ENCODE measurements at regions of chr13 and their contacts with region 1.

Region 1: GRCh38 chr13:106753251-106753650 is 185.3 kb upstream of the ARGLU1 start:
- DNase-seq: peak; percentile 35 to 47
- ATAC-seq: peak in 7 of 8 donors; percentile 45 to 83 (median 79)
- H3K4me3 ChIP-seq: peak overlapping the region in 2 of 10 donors; percentile 15 to 19
- H3K27ac ChIP-seq: peak overlapping the region in 8 of 10 donors; percentile 31 to 71 (median 54)
- H3K4me1 ChIP-seq: peaks cover 0 to 43% (median 7%) of the 10 kb centered on the region in 9 donors
- H3K27me3 ChIP-seq: no peaks in the 10 kb centered on the region
- CTCF ChIP-seq: no peak

Region 2: GRCh38 chr13:106567474-106568298 is 185.6 kb before region 1 on chr13 and contains the start of gene ARGLU1:
- intact Hi-C with region 1: loop called in 1 of 10 experiments (anchors 10 kb)
- DNase-seq: peak; percentile 94 to 96
- ATAC-seq: peak; percentile 90 to 98 (median 96)
- H3K4me3 ChIP-seq: peak within 1 kb of the TSS; percentile 66 to 96 (median 87)
- H3K27ac ChIP-seq: peak within 1 kb of the TSS; percentile 92 to 99 (median 97)
- H3K4me1 ChIP-seq: peaks cover 15 to 54% (median 44%) of the 10 kb centered on the region in 9 donors
- H3K27me3 ChIP-seq: no peaks in the 10 kb centered on the region
- CTCF ChIP-seq: no peak
- total RNA-seq, gene ARGLU1: 19.1 to 42.2 (median 29.6) TPM

Region 3: DNA sequence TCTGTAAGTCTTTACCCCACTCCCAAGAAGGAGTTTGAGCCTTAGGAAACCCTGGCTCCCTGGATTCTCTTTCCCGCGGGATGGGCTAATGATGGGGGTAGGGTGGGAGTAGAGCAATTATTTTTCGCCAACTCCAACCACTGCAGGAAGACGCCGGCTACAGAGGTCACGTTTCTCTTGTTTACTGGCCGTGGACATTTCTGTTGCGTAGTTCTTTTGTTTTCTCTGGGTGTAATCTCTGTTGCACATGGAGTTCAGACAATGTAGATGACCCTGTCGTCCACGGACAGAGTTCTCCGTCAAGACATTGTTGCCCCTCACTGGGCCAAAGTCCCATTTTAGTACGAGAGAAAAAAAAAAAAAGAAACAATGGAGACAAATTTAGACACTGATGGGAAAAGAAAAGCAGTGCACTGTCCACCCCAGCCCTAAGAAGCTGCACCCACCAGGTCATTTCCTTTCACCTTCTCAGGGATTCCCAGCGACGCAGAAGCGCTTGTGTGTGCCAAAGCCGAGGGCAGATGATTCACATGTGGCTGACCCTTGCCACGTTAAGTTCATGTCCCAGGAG is 51.4 kb before region 1 on chr13:
- intact Hi-C with region 1: loop called in 1 of 10 experiments (anchors 5 kb)
- DNase-seq: peak; percentile 17 to 67
- ATAC-seq: peak; percentile 77 to 93 (median 90)
- H3K4me3 ChIP-seq: peak overlapping the region in 2 of 10 donors; percentile 0 to 19
- H3K27ac ChIP-seq: peak overlapping the region; percentile 58 to 86 (median 74)
- H3K4me1 ChIP-seq: peaks cover 0 to 57% (median 10%) of the 10 kb centered on the region in 9 donors
- H3K27me3 ChIP-seq: no peaks in the 10 kb centered on the region
- CTCF ChIP-seq: no peak

Region 4: GRCh38 chr13:106709522-106709921 is 43.7 kb before region 1 on chr13:
- intact Hi-C with region 1: loop called in 2 of 10 experiments (anchors 5 kb)
- DNase-seq: peak in 1 of 2 donors; percentile 54
- ATAC-seq: peak; percentile 70 to 92 (median 88)
- H3K4me3 ChIP-seq: peak overlapping the region in 8 of 10 donors; percentile 19 to 50 (median 40)
- H3K27ac ChIP-seq: peak overlapping the region; percentile 65 to 90 (median 82)
- H3K4me1 ChIP-seq: peaks cover 0 to 67% (median 17%) of the 10 kb centered on the region in 9 donors
- H3K27me3 ChIP-seq: no peaks in the 10 kb centered on the region
- CTCF ChIP-seq: no peak

Region 5: GRCh38 chr13:106802976-106803375 is 49.7 kb after region 1 on chr13:
- intact Hi-C with region 1: loop called in 1 of 10 experiments (anchors 5 kb)
- DNase-seq: no peak
- ATAC-seq: no peak
- H3K4me3 ChIP-seq: no peak overlapping the region
- H3K27ac ChIP-seq: no peak overlapping the region
- H3K4me1 ChIP-seq: peaks cover 0 to 23% (median 0%) of the 10 kb centered on the region in 9 donors
- H3K27me3 ChIP-seq: peaks cover 0 to 2% (median 0%) of the 10 kb centered on the region in 7 donors
- CTCF ChIP-seq: no peak

Region 6: GRCh38 chr13:106858908-106859904 is 106.0 kb after region 1 on chr13:
- intact Hi-C with region 1: loop called in 1 of 10 experiments (anchors 5 kb)
- DNase-seq: no peak
- ATAC-seq: no peak
- H3K4me3 ChIP-seq: no peak overlapping the region
- H3K27ac ChIP-seq: no peak overlapping the region
- H3K4me1 ChIP-seq: no peaks in the 10 kb centered on the region
- H3K27me3 ChIP-seq: peaks cover 0 to 3% (median 0%) of the 10 kb centered on the region in 7 donors
- CTCF ChIP-seq: no peak

Region 7: DNA sequence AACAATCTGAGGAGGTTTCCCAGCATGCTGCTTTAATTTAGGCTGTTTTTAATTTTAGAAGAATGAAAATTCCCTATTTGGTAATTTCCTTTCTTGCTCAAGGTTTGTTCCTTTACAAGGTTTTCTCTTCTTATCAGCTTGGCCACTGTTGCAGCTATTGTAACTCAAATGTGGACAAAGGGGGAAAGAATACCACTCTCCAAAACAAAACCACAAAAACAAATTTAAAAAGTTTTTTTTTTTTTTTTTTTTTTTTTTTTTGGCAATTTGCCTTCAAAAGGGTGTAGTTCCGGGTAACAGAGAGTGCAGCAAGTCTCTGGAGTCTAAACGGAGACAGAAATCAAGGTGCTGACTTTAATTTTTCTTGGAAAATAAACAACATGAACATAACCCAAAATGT is 121.1 kb after region 1 on chr13:
- intact Hi-C with region 1: no loop called
- DNase-seq: no peak
- ATAC-seq: peak in 7 of 8 donors; percentile 48 to 82 (median 75)
- H3K4me3 ChIP-seq: no peak overlapping the region
- H3K27ac ChIP-seq: peak overlapping the region in 8 of 10 donors; percentile 1 to 80 (median 50)
- H3K4me1 ChIP-seq: peaks cover 0 to 27% (median 6%) of the 10 kb centered on the region in 9 donors
- H3K27me3 ChIP-seq: no peaks in the 10 kb centered on the region
- CTCF ChIP-seq: no peak

Measured in heart right ventricle (tissue), 16 donors.